ENCODE measurements at regions of chr11 and their contacts with region 1.

Region 1: GRCh38 chr11:1946812-1947484 is at the start of gene MRPL23:
- DNase-seq: peak; percentile 18
- H3K4me3 Mint-ChIP-seq: no peak within 1 kb of the TSS
- H3K27ac Mint-ChIP-seq: no peak within 1 kb of the TSS
- H3K4me1 Mint-ChIP-seq: no peaks in the 10 kb centered on the region
- H3K27me3 Mint-ChIP-seq: no peaks in the 10 kb centered on the region
- total RNA-seq, gene MRPL23: 99.8 to 99.9 TPM

Region 2: GRCh38 chr11:1889224-1890120 is 57.5 kb before region 1 on chr11:
- CTCF ChIA-PET with region 1: interaction called, 5 read pairs
- POLR2A ChIA-PET with region 1: interaction called, 12 read pairs
- DNase-seq: peak; percentile 91
- H3K4me3 Mint-ChIP-seq: peak overlapping the region; percentile 55
- H3K27ac Mint-ChIP-seq: peak overlapping the region; percentile 94
- H3K4me1 Mint-ChIP-seq: peaks cover 43% of the 10 kb centered on the region
- H3K27me3 Mint-ChIP-seq: no peaks in the 10 kb centered on the region

Region 3: GRCh38 chr11:1988667-1989317 is 41.8 kb after region 1 on chr11:
- CTCF ChIA-PET with region 1: no interaction called
- POLR2A ChIA-PET with region 1: no interaction called
- DNase-seq: no peak
- H3K4me3 Mint-ChIP-seq: no peak overlapping the region
- H3K27ac Mint-ChIP-seq: no peak overlapping the region
- H3K4me1 Mint-ChIP-seq: no peaks in the 10 kb centered on the region
- H3K27me3 Mint-ChIP-seq: no peaks in the 10 kb centered on the region

Measured in activated CD4-positive, alpha-beta memory T cell treated with anti-CD3 and anti-CD28 coated beads, Interleukin-2, amount 10 ng/mL, durations not matched to agents 7 days and 5 days (primary cell).